ENCODE measurements at regions of chr15 and their contacts with region 1.

Region 1: DNA sequence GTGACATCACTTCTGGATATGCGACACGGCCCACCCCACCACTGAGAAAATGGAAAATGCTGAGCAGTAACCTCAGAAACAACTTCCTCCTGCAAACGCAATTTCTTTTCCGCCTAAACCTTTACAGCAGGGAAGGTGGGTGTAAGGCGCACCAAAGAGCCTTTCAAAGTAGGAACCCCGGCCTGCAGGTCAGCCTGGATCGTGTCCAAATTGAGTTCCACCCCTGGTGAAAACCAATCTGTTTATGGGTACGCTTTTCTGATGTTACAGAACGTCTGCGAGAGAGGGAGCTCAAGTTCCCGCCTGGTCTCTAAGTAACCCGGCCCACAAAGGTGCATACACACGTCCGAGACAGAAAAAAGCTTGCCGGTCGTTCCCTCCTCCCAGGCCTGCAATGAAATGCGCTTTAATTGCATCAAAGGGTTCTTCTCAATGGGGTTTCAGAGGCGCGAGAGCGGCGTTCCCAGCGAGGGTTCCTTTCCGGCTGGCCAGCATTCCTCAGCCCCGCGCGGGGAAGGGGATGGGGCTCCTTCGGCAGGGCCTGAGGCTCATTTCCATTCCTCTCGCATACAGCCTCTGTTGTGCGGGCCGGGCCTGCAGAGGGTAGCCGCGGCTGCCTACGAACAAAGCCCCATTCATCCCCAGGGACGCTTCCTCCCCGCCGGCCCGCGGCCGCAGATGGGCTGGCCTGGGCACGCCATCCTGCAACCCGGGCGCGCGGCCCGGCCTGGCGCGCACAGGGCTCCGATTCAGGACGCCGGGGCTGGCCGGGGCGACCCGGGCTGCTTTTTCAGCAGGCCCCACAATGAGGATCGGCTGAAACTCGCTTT is 138.1 kb downstream of the TMCO5A start:
- DNase-seq: no peak
- ATAC-seq: peak; percentile 83
- H3K4me3 ChIP-seq: peak overlapping the region; percentile 59
- H3K27ac ChIP-seq: peak overlapping the region; percentile 3; the same call in 1 of the 2 replicates
- H3K4me1 ChIP-seq: peaks cover 30% of the 10 kb centered on the region
- H3K27me3 ChIP-seq: no peaks in the 10 kb centered on the region
- CTCF ChIP-seq: peak; percentile 21 to 41 (median 29); a peak in 4 of 6 replicates
- EP300 ChIP-seq: 0 out of 4 replicates have a peak, but pooled peaks of 1 of the 2 experiments have one; percentile 20
- POLR2A ChIP-seq: no peak; the same call in 1 of the 2 replicates
- RAD21 ChIP-seq: peak; percentile 59

Region 2: DNA sequence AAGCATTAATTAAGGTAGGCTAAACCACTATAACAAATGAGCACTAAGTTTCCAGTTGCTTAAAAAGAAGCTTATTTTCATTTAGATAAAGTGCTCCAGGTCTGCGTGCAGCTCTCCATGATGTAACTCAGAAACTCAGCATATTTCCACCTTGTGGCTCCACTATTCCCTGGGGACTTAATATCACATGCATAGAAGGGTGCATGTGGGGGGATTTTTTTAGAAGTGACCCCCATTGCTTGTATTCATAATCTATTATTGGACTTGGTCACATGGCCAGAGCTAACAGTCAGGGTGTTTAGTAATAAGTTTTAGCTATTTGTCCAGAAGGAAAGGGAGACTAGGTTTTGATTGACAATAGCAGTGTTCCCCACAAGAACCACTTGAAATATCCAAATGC is 51.3 kb before region 1 on chr15:
- CTCF ChIA-PET with region 1: interaction called, 4 read pairs
- POLR2A ChIA-PET with region 1: no interaction called
- RAD21 ChIA-PET with region 1: interaction called, 12 read pairs
- SMC1A ChIA-PET with region 1: interaction called, 18 read pairs
- in situ Hi-C with region 1: no loop called
- intact Hi-C with region 1: no loop called
- DNase-seq: no peak
- ATAC-seq: peak; percentile 73
- H3K4me3 ChIP-seq: no peak overlapping the region
- H3K27ac ChIP-seq: no peak overlapping the region
- H3K4me1 ChIP-seq: no peaks in the 10 kb centered on the region
- H3K27me3 ChIP-seq: no peaks in the 10 kb centered on the region
- CTCF ChIP-seq: no peak
- EP300 ChIP-seq: peak; percentile 51 to 64; a peak in 3 of 4 replicates
- POLR2A ChIP-seq: no peak
- RAD21 ChIP-seq: no peak

Region 3: GRCh38 chr15:38050529-38051448 is 21.8 kb before region 1 on chr15:
- CTCF ChIA-PET with region 1: no interaction called
- POLR2A ChIA-PET with region 1: interaction called, 5 read pairs
- RAD21 ChIA-PET with region 1: interaction called, 4 read pairs
- SMC1A ChIA-PET with region 1: interaction called, 12 read pairs
- in situ Hi-C with region 1: no loop called
- intact Hi-C with region 1: no loop called
- DNase-seq: no peak
- ATAC-seq: no peak
- H3K4me3 ChIP-seq: no peak overlapping the region
- H3K27ac ChIP-seq: no peak overlapping the region
- H3K4me1 ChIP-seq: no peaks in the 10 kb centered on the region
- H3K27me3 ChIP-seq: no peaks in the 10 kb centered on the region
- CTCF ChIP-seq: no peak
- EP300 ChIP-seq: no peak
- POLR2A ChIP-seq: no peak
- RAD21 ChIP-seq: no peak

Region 4: GRCh38 chr15:38084289-38084688 is 11.7 kb after region 1 on chr15:
- CTCF ChIA-PET with region 1: interaction called, 21 read pairs
- POLR2A ChIA-PET with region 1: interaction called, 10 read pairs
- RAD21 ChIA-PET with region 1: interaction called, 25 read pairs
- SMC1A ChIA-PET with region 1: interaction called, 60 read pairs
- in situ Hi-C with region 1: no loop called
- intact Hi-C with region 1: loop called (anchors 1 kb)
- DNase-seq: peak; percentile 85
- ATAC-seq: peak; percentile 85
- H3K4me3 ChIP-seq: no peak overlapping the region
- H3K27ac ChIP-seq: no peak overlapping the region
- H3K4me1 ChIP-seq: peaks cover 33% of the 10 kb centered on the region
- H3K27me3 ChIP-seq: no peaks in the 10 kb centered on the region
- CTCF ChIP-seq: no peak
- EP300 ChIP-seq: peak in 1 of 2 experiments; percentile 77; a peak in 1 of 4 replicates
- POLR2A ChIP-seq: no peak
- RAD21 ChIP-seq: no peak

Region 5: GRCh38 chr15:38252481-38253412 is 180.2 kb after region 1 on chr15 and contains the start of gene SPRED1:
- CTCF ChIA-PET with region 1: interaction called, 7 read pairs
- POLR2A ChIA-PET with region 1: interaction called, 3 read pairs
- RAD21 ChIA-PET with region 1: interaction called, 5 read pairs
- SMC1A ChIA-PET with region 1: interaction called, 9 read pairs
- in situ Hi-C with region 1: no loop called
- intact Hi-C with region 1: loop called (anchors 2 kb)
- DNase-seq: no peak
- ATAC-seq: peak; percentile 57
- H3K4me3 ChIP-seq: peak within 1 kb of the TSS; percentile 94
- H3K27ac ChIP-seq: peak within 1 kb of the TSS; percentile 62
- H3K4me1 ChIP-seq: peaks cover 3% of the 10 kb centered on the region; the same call in 1 of the 2 replicates
- H3K27me3 ChIP-seq: no peaks in the 10 kb centered on the region; a peak in 2 of 4 replicates
- CTCF ChIP-seq: no peak
- EP300 ChIP-seq: no peak
- POLR2A ChIP-seq: no peak
- RAD21 ChIP-seq: no peak
- polyA plus RNA-seq, gene SPRED1: 0.08 to 0.13 TPM

Region 6: DNA sequence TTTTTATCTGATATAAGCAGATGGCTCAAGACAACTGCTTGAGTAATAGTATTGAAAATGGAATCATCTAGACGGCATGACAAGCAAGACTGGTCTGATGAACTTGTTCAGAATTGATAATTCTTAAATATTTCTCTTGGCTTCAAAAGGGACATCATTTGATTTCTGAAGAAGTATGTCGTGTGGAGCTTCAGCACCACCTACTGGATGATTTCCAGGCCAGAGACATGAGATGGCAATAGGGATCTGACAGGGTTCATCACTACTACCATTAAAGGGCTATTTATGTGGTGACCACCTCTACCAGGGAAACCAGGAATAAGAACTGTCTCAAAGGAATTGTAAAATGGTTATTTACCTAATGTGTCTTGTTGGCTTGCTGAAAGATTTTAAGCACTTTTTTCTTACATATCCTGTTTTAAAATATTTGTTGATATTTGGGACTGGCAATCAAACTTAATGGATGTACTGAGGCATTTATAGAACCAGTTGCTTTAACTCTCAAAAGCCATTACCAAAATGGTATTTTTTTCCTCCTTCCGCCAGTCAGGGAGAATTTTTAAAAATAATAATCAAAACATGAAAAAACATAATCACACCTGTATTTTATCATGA is 281.9 kb after region 1 on chr15:
- CTCF ChIA-PET with region 1: interaction called, 8 read pairs
- POLR2A ChIA-PET with region 1: no interaction called
- RAD21 ChIA-PET with region 1: interaction called, 4 read pairs
- SMC1A ChIA-PET with region 1: interaction called, 5 read pairs
- in situ Hi-C with region 1: no loop called
- intact Hi-C with region 1: loop called (anchors 5 kb)
- DNase-seq: peak; percentile 31
- ATAC-seq: peak; percentile 86
- H3K4me3 ChIP-seq: no peak overlapping the region
- H3K27ac ChIP-seq: no peak overlapping the region
- H3K4me1 ChIP-seq: no peaks in the 10 kb centered on the region
- H3K27me3 ChIP-seq: no peaks in the 10 kb centered on the region
- CTCF ChIP-seq: peak; percentile 73 to 89 (median 80); a peak in 4 of 6 replicates
- EP300 ChIP-seq: no peak
- POLR2A ChIP-seq: no peak
- RAD21 ChIP-seq: peak; percentile 98

Region 7: GRCh38 chr15:38508647-38509046 is 436.1 kb after region 1 on chr15:
- CTCF ChIA-PET with region 1: no interaction called
- POLR2A ChIA-PET with region 1: no interaction called
- RAD21 ChIA-PET with region 1: no interaction called
- SMC1A ChIA-PET with region 1: no interaction called
- in situ Hi-C with region 1: no loop called
- intact Hi-C with region 1: no loop called
- DNase-seq: peak; percentile 47
- ATAC-seq: peak; percentile 68
- H3K4me3 ChIP-seq: no peak overlapping the region
- H3K27ac ChIP-seq: peak overlapping the region; percentile 50
- H3K4me1 ChIP-seq: peaks cover 11% of the 10 kb centered on the region
- H3K27me3 ChIP-seq: no peaks in the 10 kb centered on the region
- CTCF ChIP-seq: no peak
- EP300 ChIP-seq: no peak
- POLR2A ChIP-seq: no peak
- RAD21 ChIP-seq: no peak